ENCODE measurements at regions of chr1 and their contacts with region 1.

Region 1: GRCh38 chr1:180863158-180863775 is 49.4 kb upstream of the KIAA1614 start:
- DNase-seq: no peak
- ATAC-seq: no peak
- H3K4me3 ChIP-seq: no peak overlapping the region
- H3K27ac ChIP-seq: no peak overlapping the region
- H3K4me1 ChIP-seq: no peaks in the 10 kb centered on the region
- H3K27me3 ChIP-seq: no peaks in the 10 kb centered on the region
- CTCF ChIP-seq: peak; percentile 51 to 69 (median 59); a peak in 5 of 6 replicates
- EP300 ChIP-seq: no peak
- POLR2A ChIP-seq: no peak
- RAD21 ChIP-seq: peak; percentile 88

Region 2: DNA sequence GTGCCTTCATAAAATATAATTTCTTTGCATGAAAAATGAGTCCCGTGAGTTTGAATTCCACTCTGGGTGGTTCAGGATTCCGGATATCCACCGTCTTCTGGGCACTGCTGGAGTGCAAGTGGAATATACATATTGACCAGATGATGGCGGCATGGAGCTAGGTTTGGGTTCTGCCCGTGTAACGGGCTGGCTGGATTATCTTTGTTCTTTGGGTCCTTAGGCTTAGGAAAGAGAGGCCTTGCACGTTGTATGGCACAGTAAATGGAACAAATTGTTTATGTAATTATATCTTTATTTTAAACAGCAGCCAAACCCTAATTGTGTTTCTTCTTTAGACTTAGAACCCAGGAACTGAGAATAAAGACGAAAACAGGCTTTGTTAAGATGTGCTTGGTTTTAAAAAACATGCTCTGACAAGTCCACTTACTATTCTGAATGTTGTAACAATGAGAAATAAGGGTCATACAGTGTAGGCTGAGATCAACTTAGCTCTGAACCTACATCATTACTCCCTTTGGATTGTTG is 347.3 kb before region 1 on chr1:
- CTCF ChIA-PET with region 1: interaction called, 236 read pairs
- POLR2A ChIA-PET with region 1: interaction called, 3 read pairs
- RAD21 ChIA-PET with region 1: interaction called, 110 read pairs
- SMC1A ChIA-PET with region 1: interaction called, 139 read pairs
- in situ Hi-C with region 1: no loop called
- intact Hi-C with region 1: loop called (anchors 5 kb)
- DNase-seq: peak; percentile 49
- ATAC-seq: peak; percentile 99
- H3K4me3 ChIP-seq: no peak overlapping the region
- H3K27ac ChIP-seq: peak overlapping the region; percentile 40; the same call in 1 of the 2 replicates
- H3K4me1 ChIP-seq: peaks cover 3% of the 10 kb centered on the region; the same call in 1 of the 2 replicates
- H3K27me3 ChIP-seq: no peaks in the 10 kb centered on the region
- CTCF ChIP-seq: peak; percentile 72 to 88 (median 76)
- EP300 ChIP-seq: no peak
- POLR2A ChIP-seq: no peak
- RAD21 ChIP-seq: peak; percentile 92

Region 3: DNA sequence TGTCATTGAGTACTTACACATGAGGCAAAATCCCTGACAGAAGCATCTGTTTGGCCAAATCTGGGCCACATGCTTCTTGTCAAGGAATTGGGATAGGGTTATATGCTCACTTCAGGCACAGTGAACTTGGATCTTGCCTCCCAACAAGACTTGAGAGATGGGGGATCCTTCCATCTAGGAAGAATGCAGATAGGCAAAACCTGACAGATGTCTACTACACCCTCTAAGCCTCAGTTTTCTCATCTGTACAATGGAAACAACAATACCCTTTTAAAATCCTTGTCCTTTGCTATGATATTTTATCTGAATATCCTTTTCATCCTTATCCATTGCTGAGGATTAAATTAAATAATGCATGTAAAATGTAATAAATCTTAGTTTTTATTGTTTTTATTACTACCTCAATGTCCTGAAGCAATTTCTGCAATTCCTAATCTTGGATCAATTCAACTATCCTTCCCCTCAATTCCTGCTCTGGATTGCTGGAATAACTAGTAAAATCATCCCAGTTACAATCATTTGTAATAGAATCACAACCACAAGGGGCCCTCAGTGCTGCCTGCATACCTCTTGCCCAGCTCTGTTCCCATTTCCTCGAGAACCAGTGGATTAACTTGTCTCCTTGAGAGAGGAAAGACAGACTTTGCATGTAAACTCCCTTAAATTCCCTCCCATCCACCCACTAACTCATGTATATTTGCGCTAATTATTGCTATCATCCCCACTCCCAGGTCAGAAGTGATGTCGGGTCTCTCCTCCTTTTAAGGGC is 239.5 kb before region 1 on chr1:
- CTCF ChIA-PET with region 1: interaction called, 18 read pairs
- POLR2A ChIA-PET with region 1: no interaction called
- RAD21 ChIA-PET with region 1: interaction called, 3 read pairs
- SMC1A ChIA-PET with region 1: interaction called, 15 read pairs
- in situ Hi-C with region 1: no loop called
- intact Hi-C with region 1: no loop called
- DNase-seq: no peak
- ATAC-seq: no peak
- H3K4me3 ChIP-seq: no peak overlapping the region
- H3K27ac ChIP-seq: no peak overlapping the region
- H3K4me1 ChIP-seq: no peaks in the 10 kb centered on the region
- H3K27me3 ChIP-seq: 0 out of 4 replicates have a peak, but pooled peaks cover 0 to 3% of the 10 kb centered on the region in 2 experiments
- CTCF ChIP-seq: no peak
- EP300 ChIP-seq: no peak
- POLR2A ChIP-seq: no peak
- RAD21 ChIP-seq: no peak

Region 4: DNA sequence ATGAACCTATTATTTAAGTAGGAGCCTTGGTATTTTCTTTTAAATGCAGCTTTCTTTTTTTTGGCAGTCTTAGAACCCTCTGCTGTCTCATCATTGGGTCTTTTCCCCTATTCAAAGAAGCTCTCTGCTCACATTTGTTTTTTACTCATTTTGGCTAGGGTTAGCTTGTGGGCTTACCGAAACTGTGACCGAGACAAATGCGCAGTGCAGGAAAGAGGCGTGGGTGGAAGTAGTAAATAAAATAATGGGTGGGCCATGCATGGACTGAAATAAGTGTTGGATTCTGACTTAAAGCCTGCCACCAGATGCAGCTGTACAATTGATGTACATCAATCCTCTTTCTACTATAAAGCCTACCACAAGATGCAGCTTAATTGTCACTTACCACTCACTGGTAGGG is 216.7 kb before region 1 on chr1:
- CTCF ChIA-PET with region 1: interaction called, 21 read pairs
- POLR2A ChIA-PET with region 1: no interaction called
- RAD21 ChIA-PET with region 1: interaction called, 6 read pairs
- SMC1A ChIA-PET with region 1: interaction called, 17 read pairs
- in situ Hi-C with region 1: no loop called
- intact Hi-C with region 1: no loop called
- DNase-seq: peak; percentile 32
- ATAC-seq: peak; percentile 79
- H3K4me3 ChIP-seq: no peak overlapping the region
- H3K27ac ChIP-seq: no peak overlapping the region
- H3K4me1 ChIP-seq: no peaks in the 10 kb centered on the region
- H3K27me3 ChIP-seq: no peaks in the 10 kb centered on the region
- CTCF ChIP-seq: no peak
- EP300 ChIP-seq: no peak
- POLR2A ChIP-seq: no peak
- RAD21 ChIP-seq: no peak

Region 5: DNA sequence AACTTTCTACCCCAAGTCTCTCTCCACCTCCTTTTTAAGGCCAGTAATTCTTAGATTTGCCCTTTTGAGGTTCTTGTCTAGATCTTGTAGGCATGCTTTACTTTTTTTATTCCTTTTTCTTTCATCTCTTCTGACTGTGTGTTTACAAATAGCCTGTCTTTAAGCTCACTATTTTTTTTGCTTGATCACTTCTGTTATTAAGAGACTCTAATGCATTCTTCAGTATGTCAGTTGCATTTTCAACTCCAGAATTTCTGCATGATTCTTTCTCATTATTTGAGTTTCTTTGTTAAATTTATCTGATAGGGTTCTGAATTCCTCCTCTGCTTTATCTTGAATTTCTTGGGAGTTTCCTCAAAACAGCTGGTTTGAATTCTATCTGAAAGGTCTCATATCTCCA is 200.6 kb before region 1 on chr1:
- CTCF ChIA-PET with region 1: no interaction called
- POLR2A ChIA-PET with region 1: no interaction called
- RAD21 ChIA-PET with region 1: no interaction called
- SMC1A ChIA-PET with region 1: no interaction called
- in situ Hi-C with region 1: no loop called
- intact Hi-C with region 1: no loop called
- DNase-seq: no peak
- ATAC-seq: no peak
- H3K4me3 ChIP-seq: no peak overlapping the region
- H3K27ac ChIP-seq: no peak overlapping the region
- H3K4me1 ChIP-seq: no peaks in the 10 kb centered on the region
- H3K27me3 ChIP-seq: no peaks in the 10 kb centered on the region
- CTCF ChIP-seq: no peak
- EP300 ChIP-seq: no peak
- POLR2A ChIP-seq: no peak
- RAD21 ChIP-seq: no peak

Region 6: DNA sequence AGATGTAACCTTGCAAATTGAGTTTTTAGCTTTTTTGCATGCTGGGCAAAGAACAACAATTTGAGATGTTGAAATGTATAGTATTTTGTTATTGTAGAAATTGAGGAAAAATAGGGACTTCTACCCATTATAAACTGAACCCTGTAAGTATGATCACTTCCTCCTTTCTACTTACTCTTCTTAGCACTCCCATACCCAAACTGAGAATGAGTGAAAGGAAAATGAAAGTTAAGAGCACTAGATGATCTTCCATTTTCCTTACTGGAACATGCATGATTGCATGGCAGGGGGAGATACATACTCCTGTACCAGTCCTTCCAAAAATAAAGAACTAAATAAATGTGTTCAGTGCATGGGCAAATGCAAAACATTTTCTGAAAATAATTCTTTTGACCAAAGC is 58.0 kb before region 1 on chr1:
- CTCF ChIA-PET with region 1: interaction called, 15 read pairs
- POLR2A ChIA-PET with region 1: no interaction called
- RAD21 ChIA-PET with region 1: interaction called, 8 read pairs
- SMC1A ChIA-PET with region 1: interaction called, 14 read pairs
- in situ Hi-C with region 1: no loop called
- intact Hi-C with region 1: no loop called
- DNase-seq: peak; percentile 31
- ATAC-seq: peak; percentile 90
- H3K4me3 ChIP-seq: no peak overlapping the region
- H3K27ac ChIP-seq: no peak overlapping the region; the same call in 1 of the 2 replicates
- H3K4me1 ChIP-seq: peaks cover 9% of the 10 kb centered on the region; the same call in 1 of the 2 replicates
- H3K27me3 ChIP-seq: no peaks in the 10 kb centered on the region
- CTCF ChIP-seq: no peak
- EP300 ChIP-seq: no peak
- POLR2A ChIP-seq: no peak
- RAD21 ChIP-seq: no peak

Region 7: GRCh38 chr1:180881806-180882509 is 18.7 kb after region 1 on chr1:
- CTCF ChIA-PET with region 1: interaction called, 21 read pairs
- POLR2A ChIA-PET with region 1: no interaction called
- RAD21 ChIA-PET with region 1: interaction called, 12 read pairs
- SMC1A ChIA-PET with region 1: interaction called, 11 read pairs
- in situ Hi-C with region 1: no loop called
- intact Hi-C with region 1: no loop called
- DNase-seq: no peak
- ATAC-seq: peak; percentile 92
- H3K4me3 ChIP-seq: no peak overlapping the region
- H3K27ac ChIP-seq: no peak overlapping the region
- H3K4me1 ChIP-seq: no peaks in the 10 kb centered on the region
- H3K27me3 ChIP-seq: no peaks in the 10 kb centered on the region
- CTCF ChIP-seq: peak; percentile 38 to 66 (median 49); a peak in 5 of 6 replicates
- EP300 ChIP-seq: no peak
- POLR2A ChIP-seq: no peak
- RAD21 ChIP-seq: peak; percentile 80